ENCODE measurements at regions of chr2 and their contacts with region 1.

Region 1: GRCh38 chr2:216687646-216688045 is 7.7 kb downstream of the IGFBP5 start:
- DNase-seq: no peak
- ATAC-seq: no peak
- H3K4me3 ChIP-seq: no peak overlapping the region
- H3K27ac ChIP-seq: peak overlapping the region; percentile 93 to 95 (median 93)
- H3K4me1 ChIP-seq: peaks cover 85 to 93% of the 10 kb centered on the region in 2 donors
- H3K27me3 ChIP-seq: no peaks in the 10 kb centered on the region
- CTCF ChIP-seq: peak in 2 of 5 experiments; percentile 44 to 54
- POLR2A ChIP-seq: no peak

Region 2: GRCh38 chr2:216362730-216363129 is 324.9 kb before region 1 on chr2:
- in situ Hi-C with region 1: no loop called
- intact Hi-C with region 1: no loop called
- DNase-seq: no peak
- ATAC-seq: no peak
- H3K4me3 ChIP-seq: no peak overlapping the region
- H3K27ac ChIP-seq: no peak overlapping the region
- H3K4me1 ChIP-seq: no peaks in the 10 kb centered on the region
- H3K27me3 ChIP-seq: peaks cover 0 to 16% (median 9%) of the 10 kb centered on the region in 3 donors
- CTCF ChIP-seq: no peak
- POLR2A ChIP-seq: no peak

Region 3: DNA sequence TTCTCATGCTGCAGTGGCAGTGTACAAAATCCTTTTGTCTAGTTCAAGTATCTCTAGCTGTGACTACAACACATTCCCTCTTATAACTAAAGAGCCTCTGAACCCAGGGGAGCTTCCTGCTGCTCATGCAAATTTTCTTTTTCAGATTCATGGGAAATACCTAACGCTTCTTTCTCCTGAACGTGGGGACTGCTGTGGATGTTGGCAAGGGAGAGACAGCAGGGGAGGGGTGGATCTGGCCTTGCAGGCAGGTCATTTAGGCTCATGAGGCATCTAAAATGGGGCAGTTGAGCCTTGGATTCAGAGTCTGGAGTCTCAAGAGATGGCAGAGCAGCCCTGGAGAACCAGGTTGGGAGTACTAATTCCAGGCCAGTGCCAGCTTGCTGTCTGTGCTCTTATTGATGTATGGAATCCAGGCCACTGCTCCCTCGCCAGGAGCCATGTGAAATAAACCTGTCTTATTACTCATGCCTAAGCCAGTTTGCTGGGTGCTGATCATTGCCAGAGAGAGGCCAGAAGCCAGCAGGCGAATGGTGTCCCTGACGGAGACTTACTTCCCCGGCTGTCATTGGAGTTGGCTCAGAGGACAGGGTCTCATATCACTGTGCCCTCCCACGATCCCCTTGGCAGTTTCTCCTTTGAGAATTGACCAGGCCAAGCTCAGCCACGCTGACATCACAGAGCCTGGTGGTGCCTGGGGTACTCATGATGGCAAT is 201.4 kb after region 1 on chr2:
- in situ Hi-C with region 1: loop called (anchors 5 to 25 kb)
- intact Hi-C with region 1: loop called (anchors 5 kb)
- DNase-seq: peak; percentile 86 to 94
- ATAC-seq: peak; percentile 67
- H3K4me3 ChIP-seq: peak overlapping the region in 1 of 4 donors; percentile 11
- H3K27ac ChIP-seq: peak overlapping the region; percentile 87 to 95 (median 90)
- H3K4me1 ChIP-seq: peaks cover 50 to 55% of the 10 kb centered on the region in 2 donors
- H3K27me3 ChIP-seq: no peaks in the 10 kb centered on the region
- CTCF ChIP-seq: no peak
- POLR2A ChIP-seq: peak; percentile 20 to 34

Region 4: GRCh38 chr2:217338306-217338916 is 650.8 kb after region 1 on chr2:
- in situ Hi-C with region 1: no loop called
- intact Hi-C with region 1: loop called (anchors 5 kb)
- DNase-seq: peak in 1 of 2 donors; percentile 34
- ATAC-seq: peak; percentile 58 to 61
- H3K4me3 ChIP-seq: no peak overlapping the region
- H3K27ac ChIP-seq: peak overlapping the region; percentile 46 to 61 (median 48)
- H3K4me1 ChIP-seq: peaks cover 5 to 7% of the 10 kb centered on the region in 2 donors
- H3K27me3 ChIP-seq: no peaks in the 10 kb centered on the region
- CTCF ChIP-seq: no peak
- POLR2A ChIP-seq: no peak

Region 5: GRCh38 chr2:217510771-217511291 is 823.2 kb after region 1 on chr2:
- in situ Hi-C with region 1: loop called in 3 of 4 experiments (anchors 5 to 10 kb)
- intact Hi-C with region 1: loop called (anchors 1 kb)
- DNase-seq: peak; percentile 25 to 60
- ATAC-seq: peak; percentile 96 to 98
- H3K4me3 ChIP-seq: no peak overlapping the region
- H3K27ac ChIP-seq: no peak overlapping the region
- H3K4me1 ChIP-seq: no peaks in the 10 kb centered on the region
- H3K27me3 ChIP-seq: no peaks in the 10 kb centered on the region
- CTCF ChIP-seq: peak; percentile 51 to 72 (median 69)
- POLR2A ChIP-seq: no peak

Region 6: GRCh38 chr2:218026676-218027425 is 1339.2 kb after region 1 on chr2:
- in situ Hi-C with region 1: no loop called
- intact Hi-C with region 1: loop called (anchors 10 kb)
- DNase-seq: peak in 1 of 2 donors; percentile 60
- ATAC-seq: peak in 1 of 2 donors; percentile 21
- H3K4me3 ChIP-seq: no peak overlapping the region
- H3K27ac ChIP-seq: peak overlapping the region; percentile 2 to 60 (median 34)
- H3K4me1 ChIP-seq: peaks cover 56 to 61% of the 10 kb centered on the region in 2 donors
- H3K27me3 ChIP-seq: no peaks in the 10 kb centered on the region
- CTCF ChIP-seq: no peak
- POLR2A ChIP-seq: no peak